Activated naive CD4-positive, alpha-beta T cell treated with anti-CD3 and anti-CD28 coated beads for 36 hours (primary cell): ENCODE measurements at regions of chr16 and their contacts with region 1.

Region 1: DNA sequence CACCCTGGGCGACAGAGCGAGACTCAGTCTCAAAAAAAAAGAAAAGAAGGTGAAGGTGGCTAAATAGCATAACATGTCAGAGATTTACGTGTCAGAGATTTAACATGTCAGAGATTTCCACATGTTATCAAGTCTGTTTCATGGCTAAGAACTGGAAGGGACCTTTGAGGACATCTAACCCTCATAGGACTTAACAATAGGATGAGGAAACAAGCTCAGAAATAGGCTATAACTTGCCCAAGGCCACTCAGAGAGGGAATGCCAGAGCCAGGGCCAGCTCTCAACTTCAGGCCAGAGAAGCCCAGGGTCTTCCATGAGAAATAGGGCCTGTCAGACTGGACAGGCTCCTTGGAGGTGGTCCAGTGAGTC is 26.8 kb upstream of the ZNF629 start:
- DNase-seq: no peak
- H3K4me3 Mint-ChIP-seq: peak overlapping the region; percentile 76
- H3K27ac Mint-ChIP-seq: peak overlapping the region; percentile 38
- H3K4me1 Mint-ChIP-seq: peaks cover 14% of the 10 kb centered on the region
- H3K27me3 Mint-ChIP-seq: no peaks in the 10 kb centered on the region

Region 2: DNA sequence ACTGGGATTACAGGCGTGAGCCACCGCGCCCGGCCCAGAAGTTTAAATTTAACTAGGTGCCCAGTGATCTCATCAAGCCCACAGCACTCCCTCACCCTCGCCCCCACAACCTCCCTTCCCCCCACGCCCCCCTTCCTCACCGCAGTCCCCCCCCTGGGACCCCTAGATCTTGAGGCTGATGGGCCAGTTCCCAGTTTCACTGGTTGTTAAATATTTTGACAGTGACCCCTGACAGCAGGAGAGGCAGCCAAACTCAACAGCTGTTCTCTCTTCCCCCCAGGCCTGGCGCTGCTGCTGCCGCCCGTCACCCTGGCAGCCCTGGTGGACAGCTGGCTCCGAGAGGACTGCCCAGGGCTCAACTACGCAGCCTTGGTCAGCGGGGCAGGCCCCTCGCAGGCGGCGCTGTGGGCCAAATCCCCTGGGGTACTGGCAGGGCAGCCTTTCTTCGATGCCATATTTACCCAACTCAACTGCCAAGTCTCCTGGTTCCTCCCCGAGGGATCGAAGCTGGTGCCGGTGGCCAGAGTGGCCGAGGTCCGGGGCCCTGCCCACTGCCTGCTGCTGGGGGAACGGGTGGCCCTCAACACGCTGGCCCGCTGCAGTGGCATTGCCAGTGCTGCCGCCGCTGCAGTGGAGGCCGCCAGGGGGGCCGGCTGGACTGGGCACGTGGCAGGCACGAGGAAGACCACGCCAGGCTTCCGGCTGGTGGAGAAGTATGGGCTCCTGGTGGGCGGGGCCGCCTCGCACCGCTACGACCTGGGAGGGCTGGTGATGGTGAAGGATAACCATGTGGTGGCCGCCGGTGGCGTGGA is 1119.2 kb before region 1 on chr16:
- CTCF ChIA-PET with region 1: no interaction called
- intact Hi-C with region 1: no loop called
- DNase-seq: no peak
- H3K4me3 Mint-ChIP-seq: no peak overlapping the region
- H3K27ac Mint-ChIP-seq: no peak overlapping the region
- H3K4me1 Mint-ChIP-seq: peaks cover 5% of the 10 kb centered on the region
- H3K27me3 Mint-ChIP-seq: no peaks in the 10 kb centered on the region

Region 3: GRCh38 chr16:30650369-30651123 is 163.3 kb before region 1 on chr16 and contains the start of gene PRR14:
- CTCF ChIA-PET with region 1: no interaction called
- intact Hi-C with region 1: loop called (anchors 2 kb)
- DNase-seq: peak; percentile 100
- H3K4me3 Mint-ChIP-seq: peak within 1 kb of the TSS; percentile 85
- H3K27ac Mint-ChIP-seq: peak within 1 kb of the TSS; percentile 91
- H3K4me1 Mint-ChIP-seq: peaks cover 22% of the 10 kb centered on the region
- H3K27me3 Mint-ChIP-seq: no peaks in the 10 kb centered on the region
- total RNA-seq, gene PRR14: 50.6 to 52.4 TPM

Region 4: DNA sequence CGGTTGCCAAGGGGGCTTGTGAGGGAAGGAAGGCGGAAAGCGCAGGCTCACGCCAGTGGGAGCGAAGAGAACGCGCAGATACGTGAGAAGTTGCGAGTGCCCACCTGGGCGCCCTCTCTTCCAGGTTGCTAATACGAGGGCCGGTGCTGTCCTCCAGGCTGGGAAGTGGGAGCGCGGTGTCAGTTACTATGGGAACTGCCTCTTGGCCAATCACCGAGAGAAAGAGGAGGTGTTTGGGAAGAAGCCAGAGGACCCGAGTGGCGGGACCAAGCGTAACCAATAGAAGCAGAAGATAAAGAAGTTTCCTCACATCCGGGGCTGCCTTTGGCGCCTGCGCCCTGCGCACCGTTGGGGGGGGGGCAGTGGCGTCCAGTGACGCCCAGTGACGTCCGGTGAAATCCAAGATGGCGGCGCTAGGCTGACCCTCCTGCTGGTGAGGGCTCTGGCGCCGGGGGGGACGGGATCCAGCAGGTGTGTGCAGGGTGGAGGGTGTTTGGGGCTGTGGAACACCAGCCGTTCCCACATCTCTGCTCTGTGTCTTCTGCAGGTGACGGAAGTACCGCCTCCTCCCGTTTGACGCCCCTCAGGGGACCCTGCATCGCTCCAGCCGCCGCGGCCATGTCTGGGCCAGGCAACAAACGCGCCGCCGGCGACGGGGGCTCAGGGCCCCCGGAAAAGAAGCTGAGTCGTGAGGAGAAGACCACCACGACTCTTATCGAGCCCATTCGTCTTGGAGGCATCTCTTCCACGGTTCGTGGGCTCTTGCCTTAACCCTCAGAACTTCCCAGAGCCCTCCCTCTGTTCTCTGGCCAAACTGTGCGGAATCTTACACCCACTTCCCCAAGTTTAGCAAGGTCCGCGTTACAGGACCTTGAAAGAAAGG is 51.6 kb before region 1 on chr16 and contains the starts of genes CFAP119 and RNF40:
- CTCF ChIA-PET with region 1: interaction called, 3 read pairs
- intact Hi-C with region 1: loop called (anchors 1 kb)
- DNase-seq: peak; percentile 95
- H3K4me3 Mint-ChIP-seq: peak within 1 kb of the TSS; percentile 94
- H3K27ac Mint-ChIP-seq: peak within 1 kb of the TSS; percentile 87
- H3K4me1 Mint-ChIP-seq: peaks cover 25% of the 10 kb centered on the region
- H3K27me3 Mint-ChIP-seq: no peaks in the 10 kb centered on the region
- total RNA-seq, gene CFAP119: 2.0 to 2.3 TPM
- total RNA-seq, gene RNF40: 51.1 to 61.0 TPM

Region 5: GRCh38 chr16:30786936-30787612 is 26.7 kb before region 1 on chr16 and contains the start of gene ZNF629:
- CTCF ChIA-PET with region 1: interaction called, 4 read pairs
- intact Hi-C with region 1: loop called (anchors 1 kb)
- DNase-seq: peak; percentile 37
- H3K4me3 Mint-ChIP-seq: peak within 1 kb of the TSS; percentile 82
- H3K27ac Mint-ChIP-seq: no peak within 1 kb of the TSS
- H3K4me1 Mint-ChIP-seq: peaks cover 16% of the 10 kb centered on the region
- H3K27me3 Mint-ChIP-seq: no peaks in the 10 kb centered on the region
- total RNA-seq, gene ZNF629: 2.1 to 2.3 TPM

Region 6: DNA sequence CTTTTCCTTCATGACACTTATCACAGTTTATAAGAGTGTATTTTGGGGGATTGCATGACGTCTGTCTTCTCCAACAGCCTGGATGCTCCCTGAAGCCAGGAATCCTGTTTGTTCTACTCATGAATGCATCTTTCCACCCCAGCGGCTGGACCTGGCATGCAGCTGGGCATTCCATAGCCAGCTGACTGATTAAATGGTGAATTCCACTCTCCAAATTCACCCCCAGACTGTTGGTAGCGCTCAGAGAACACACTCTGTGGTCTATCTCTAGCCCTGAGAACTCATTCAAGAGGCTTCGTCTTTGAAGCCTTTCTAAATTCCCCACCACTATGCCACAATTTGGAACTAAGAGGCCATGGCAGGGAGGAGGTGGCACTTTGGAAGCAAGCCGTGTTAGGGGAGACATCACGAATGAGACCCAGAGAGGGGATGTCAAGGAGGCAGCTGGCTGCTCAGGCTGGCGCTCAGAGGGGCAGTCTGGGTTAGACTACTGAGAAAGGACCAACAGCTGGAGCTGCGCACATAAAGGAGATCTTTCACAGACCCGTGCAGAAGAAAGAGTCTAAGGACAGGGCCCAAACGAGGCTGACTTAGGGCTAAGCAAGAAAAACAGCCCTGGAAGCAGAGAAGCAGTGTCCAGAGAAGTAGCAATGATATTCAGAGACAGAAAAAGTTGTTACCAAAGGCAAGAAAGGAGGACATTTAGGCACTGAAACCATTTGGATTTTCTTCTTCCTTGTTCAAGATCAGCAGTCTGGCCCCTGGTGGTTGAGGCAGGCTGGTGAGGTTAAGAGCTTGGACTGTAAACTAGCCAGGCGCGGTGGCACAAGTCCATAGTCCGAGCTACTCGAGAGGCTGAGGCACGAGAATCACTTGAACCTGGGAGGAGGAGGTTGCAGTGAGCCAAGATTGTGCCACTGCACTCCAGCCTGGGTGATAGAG is 15.6 kb after region 1 on chr16:
- CTCF ChIA-PET with region 1: no interaction called
- intact Hi-C with region 1: no loop called
- DNase-seq: no peak
- H3K4me3 Mint-ChIP-seq: no peak overlapping the region
- H3K27ac Mint-ChIP-seq: no peak overlapping the region
- H3K4me1 Mint-ChIP-seq: no peaks in the 10 kb centered on the region
- H3K27me3 Mint-ChIP-seq: no peaks in the 10 kb centered on the region

Region 7: DNA sequence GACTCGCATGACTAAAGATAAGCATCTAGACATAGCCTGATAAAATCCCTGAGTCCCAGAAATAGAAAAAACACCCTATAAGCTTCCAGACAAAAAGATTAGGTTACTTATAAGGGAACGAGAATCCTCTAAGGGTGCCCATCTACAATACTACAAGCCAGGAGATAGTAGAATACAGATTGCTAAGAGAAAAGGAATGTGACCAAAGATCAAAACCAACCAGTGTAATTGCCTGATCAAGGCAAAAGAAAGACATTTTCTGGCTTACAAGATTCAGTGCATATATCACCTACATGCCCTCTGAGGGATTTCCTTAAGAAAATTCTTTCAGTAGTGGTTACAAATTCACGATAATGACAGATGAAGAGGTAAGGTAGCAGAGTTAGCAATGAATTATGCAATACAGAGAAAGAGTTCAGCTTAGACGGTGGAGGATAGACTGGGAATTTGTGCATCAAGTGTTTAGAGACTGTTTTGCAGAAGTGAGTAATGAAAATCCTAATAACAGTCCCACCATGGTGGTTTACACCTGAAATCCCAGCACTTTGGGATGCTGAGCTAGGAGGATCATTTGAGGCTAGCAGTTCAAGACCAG is 45.1 kb after region 1 on chr16:
- CTCF ChIA-PET with region 1: no interaction called
- intact Hi-C with region 1: no loop called
- DNase-seq: no peak
- H3K4me3 Mint-ChIP-seq: no peak overlapping the region
- H3K27ac Mint-ChIP-seq: no peak overlapping the region
- H3K4me1 Mint-ChIP-seq: no peaks in the 10 kb centered on the region
- H3K27me3 Mint-ChIP-seq: no peaks in the 10 kb centered on the region

Region 8: GRCh38 chr16:30874821-30875717 is 61.3 kb after region 1 on chr16:
- CTCF ChIA-PET with region 1: interaction called, 6 read pairs
- intact Hi-C with region 1: loop called (anchors 1 kb)
- DNase-seq: peak; percentile 90
- H3K4me3 Mint-ChIP-seq: peak overlapping the region; percentile 92
- H3K27ac Mint-ChIP-seq: peak overlapping the region; percentile 96
- H3K4me1 Mint-ChIP-seq: peaks cover 40% of the 10 kb centered on the region
- H3K27me3 Mint-ChIP-seq: no peaks in the 10 kb centered on the region

Region 9: DNA sequence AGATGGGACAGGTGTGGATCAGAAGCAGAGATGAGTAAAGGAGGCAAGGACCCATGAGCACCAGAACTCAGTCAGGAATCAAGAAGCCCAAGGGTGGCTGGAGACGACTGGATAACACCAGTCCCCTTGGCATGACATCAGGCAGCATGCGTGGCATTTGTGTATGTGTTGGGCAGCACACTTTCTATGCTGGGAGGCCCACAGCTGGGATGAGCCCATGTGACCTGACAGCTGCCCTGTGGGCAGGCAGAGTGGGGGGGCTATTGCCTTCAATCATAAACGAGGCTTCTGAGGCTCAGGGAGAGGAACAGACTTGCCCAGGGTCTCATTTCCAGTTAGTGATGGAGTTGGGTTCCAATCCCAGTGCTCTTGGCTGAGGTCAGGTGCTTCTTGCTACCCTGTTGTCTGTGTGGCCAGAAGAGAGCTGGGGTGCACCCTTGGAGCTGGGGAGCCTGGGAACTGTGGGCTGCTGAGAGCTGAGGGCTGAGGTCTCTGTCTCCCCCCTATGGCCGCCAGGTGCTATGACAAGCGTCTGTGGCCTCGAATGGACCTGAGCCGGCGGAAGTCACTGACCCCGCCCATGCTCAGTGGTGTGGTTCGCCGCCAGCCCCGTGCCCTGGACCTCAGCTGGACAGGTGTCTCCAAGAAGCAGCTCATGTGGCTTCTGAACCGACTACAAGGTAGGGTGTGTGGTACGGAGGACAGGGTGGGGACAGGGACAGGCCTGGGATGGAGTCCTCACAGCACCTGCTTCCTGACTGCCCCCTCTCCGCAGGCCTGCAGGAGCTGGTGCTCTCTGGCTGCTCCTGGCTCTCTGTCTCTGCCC is 128.0 kb after region 1 on chr16:
- CTCF ChIA-PET with region 1: interaction called, 12 read pairs
- intact Hi-C with region 1: no loop called
- DNase-seq: peak; percentile 79
- H3K4me3 Mint-ChIP-seq: no peak overlapping the region
- H3K27ac Mint-ChIP-seq: peak overlapping the region; percentile 51
- H3K4me1 Mint-ChIP-seq: peaks cover 21% of the 10 kb centered on the region
- H3K27me3 Mint-ChIP-seq: no peaks in the 10 kb centered on the region